Psoas muscle (tissue), 8 donors: ENCODE measurements at regions of chr21 and their contacts with region 1.

Region 1: DNA sequence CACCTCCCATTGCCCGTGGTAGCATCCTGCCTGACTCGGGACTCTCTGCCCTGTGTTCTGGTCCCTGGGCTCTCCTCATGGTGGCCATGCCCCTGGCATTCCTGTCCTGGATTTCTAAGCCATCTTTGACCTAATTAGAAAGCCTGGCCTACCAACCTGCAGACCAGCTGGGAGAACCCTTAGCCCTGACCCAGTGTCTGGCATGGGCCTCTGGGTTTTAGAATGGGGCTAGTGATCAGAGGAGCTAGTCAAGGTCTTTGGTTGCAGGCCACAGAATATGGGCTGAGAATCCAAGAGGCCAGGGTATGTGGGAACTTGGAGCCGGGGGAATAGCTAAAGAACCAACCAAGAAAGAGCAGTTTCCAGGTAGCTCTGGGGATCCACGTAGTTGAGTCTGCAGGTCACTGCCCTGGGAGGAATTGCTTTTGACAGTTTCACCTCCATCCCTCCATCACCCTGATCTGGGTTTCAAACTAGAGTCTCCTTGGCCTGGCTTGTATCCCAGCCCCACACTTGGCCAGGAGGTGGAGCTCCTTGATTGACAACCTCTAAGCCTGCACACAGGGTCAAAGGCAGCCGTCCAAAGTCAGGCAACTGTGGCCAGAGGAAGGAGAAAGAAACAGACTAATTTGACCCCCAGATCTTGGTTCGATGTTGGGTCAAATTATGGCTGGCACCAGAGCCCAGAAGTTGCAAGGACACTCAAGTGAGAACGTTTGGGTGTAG is 54.7 kb upstream of the ABCG1 start:
- DNase-seq: peak; percentile 53 to 82
- ATAC-seq: peak; percentile 64 to 86 (median 79)
- H3K4me3 ChIP-seq: no peak overlapping the region
- H3K27ac ChIP-seq: no peak overlapping the region
- H3K4me1 ChIP-seq: no peaks in the 10 kb centered on the region
- H3K27me3 ChIP-seq: peaks cover 0 to 2% (median 0%) of the 10 kb centered on the region in 3 donors
- CTCF ChIP-seq: peak; percentile 48

Region 2: GRCh38 chr21:41648591-41649031 is 515.6 kb before region 1 on chr21:
- intact Hi-C with region 1: no loop called
- DNase-seq: no peak
- ATAC-seq: no peak
- H3K4me3 ChIP-seq: no peak overlapping the region
- H3K27ac ChIP-seq: no peak overlapping the region
- H3K4me1 ChIP-seq: no peaks in the 10 kb centered on the region
- H3K27me3 ChIP-seq: peaks cover 0 to 3% (median 0%) of the 10 kb centered on the region in 3 donors
- CTCF ChIP-seq: no peak

Region 3: GRCh38 chr21:42258153-42258884 is 94.1 kb after region 1 on chr21:
- intact Hi-C with region 1: loop called in 1 of 2 experiments (anchors 5 kb)
- DNase-seq: peak; percentile 66 to 86
- ATAC-seq: peak; percentile 78 to 88 (median 82)
- H3K4me3 ChIP-seq: no peak overlapping the region
- H3K27ac ChIP-seq: no peak overlapping the region
- H3K4me1 ChIP-seq: peaks cover 20% of the 10 kb centered on the region
- H3K27me3 ChIP-seq: no peaks in the 10 kb centered on the region
- CTCF ChIP-seq: peak; percentile 81